ENCODE measurements at regions of chr10 and their contacts with region 1.

Region 1: DNA sequence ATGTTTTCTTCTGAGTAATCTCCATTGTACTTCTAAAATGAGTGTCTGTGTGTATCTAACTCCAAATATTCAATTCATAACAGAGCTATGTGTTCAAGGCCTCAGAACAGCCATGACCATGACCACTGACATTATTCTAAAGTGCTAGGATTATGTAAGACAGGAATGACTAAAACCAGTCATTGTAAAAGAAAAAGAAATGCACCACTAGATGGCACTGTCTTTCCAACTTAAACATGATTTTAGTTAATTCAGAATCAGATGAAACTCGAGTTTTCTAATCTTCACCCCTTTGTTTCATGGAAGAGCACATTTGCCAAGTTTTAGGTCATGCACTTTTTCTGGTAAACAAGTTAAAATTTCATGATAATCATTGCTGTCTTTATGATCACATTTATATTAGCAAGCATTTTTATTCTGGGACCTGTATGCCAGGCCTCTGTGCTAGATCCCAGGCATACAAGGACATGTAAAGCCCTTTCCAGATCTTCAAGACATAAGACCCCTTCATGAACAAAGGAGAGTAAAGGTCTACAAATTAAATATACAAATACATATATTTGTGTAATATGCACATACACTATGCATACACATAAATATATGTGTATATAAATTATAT is 26.1 kb upstream of the RSU1 start:
- DNase-seq: peak in 3 of 9 experiments; percentile 16 to 78 (median 63)
- ATAC-seq: peak; percentile 51
- H3K4me3 ChIP-seq: no peak overlapping the region
- H3K4me3 Mint-ChIP-seq: no peak overlapping the region
- H3K27ac ChIP-seq: no peak overlapping the region
- H3K27ac Mint-ChIP-seq: no peak overlapping the region
- H3K4me1 ChIP-seq: no peaks in the 10 kb centered on the region
- H3K4me1 Mint-ChIP-seq: no peaks in the 10 kb centered on the region
- H3K27me3 ChIP-seq: no peaks in the 10 kb centered on the region
- H3K27me3 Mint-ChIP-seq: no peaks in the 10 kb centered on the region
- CTCF ChIP-seq: peak; percentile 72

Region 2: GRCh38 chr10:16765509-16766375 is 77.6 kb before region 1 on chr10:
- CTCF ChIA-PET with region 1: no interaction called
- POLR2A ChIA-PET with region 1: no interaction called
- intact Hi-C with region 1: no loop called
- DNase-seq: no peak
- ATAC-seq: no peak
- H3K4me3 ChIP-seq: no peak overlapping the region
- H3K4me3 Mint-ChIP-seq: no peak overlapping the region
- H3K27ac ChIP-seq: no peak overlapping the region
- H3K27ac Mint-ChIP-seq: no peak overlapping the region
- H3K4me1 ChIP-seq: no peaks in the 10 kb centered on the region
- H3K4me1 Mint-ChIP-seq: peaks cover 20% of the 10 kb centered on the region
- H3K27me3 ChIP-seq: no peaks in the 10 kb centered on the region
- H3K27me3 Mint-ChIP-seq: no peaks in the 10 kb centered on the region
- CTCF ChIP-seq: no peak

Region 3: GRCh38 chr10:16867556-16867955 is 24.2 kb after region 1 on chr10:
- CTCF ChIA-PET with region 1: no interaction called
- POLR2A ChIA-PET with region 1: no interaction called
- intact Hi-C with region 1: no loop called
- DNase-seq: no peak
- ATAC-seq: no peak
- H3K4me3 ChIP-seq: no peak overlapping the region
- H3K4me3 Mint-ChIP-seq: no peak overlapping the region
- H3K27ac ChIP-seq: no peak overlapping the region
- H3K27ac Mint-ChIP-seq: no peak overlapping the region
- H3K4me1 ChIP-seq: no peaks in the 10 kb centered on the region
- H3K4me1 Mint-ChIP-seq: no peaks in the 10 kb centered on the region
- H3K27me3 ChIP-seq: no peaks in the 10 kb centered on the region
- H3K27me3 Mint-ChIP-seq: no peaks in the 10 kb centered on the region
- CTCF ChIP-seq: no peak

Region 4: GRCh38 chr10:17249820-17250219 is 406.5 kb after region 1 on chr10:
- CTCF ChIA-PET with region 1: interaction called, 10 read pairs
- POLR2A ChIA-PET with region 1: no interaction called
- intact Hi-C with region 1: loop called (anchors 1 to 2 kb)
- DNase-seq: peak in 2 of 9 experiments; percentile 40 to 55
- ATAC-seq: peak; percentile 62
- H3K4me3 ChIP-seq: no peak overlapping the region
- H3K4me3 Mint-ChIP-seq: no peak overlapping the region
- H3K27ac ChIP-seq: no peak overlapping the region
- H3K27ac Mint-ChIP-seq: no peak overlapping the region
- H3K4me1 ChIP-seq: no peaks in the 10 kb centered on the region
- H3K4me1 Mint-ChIP-seq: no peaks in the 10 kb centered on the region
- H3K27me3 ChIP-seq: no peaks in the 10 kb centered on the region
- H3K27me3 Mint-ChIP-seq: no peaks in the 10 kb centered on the region
- CTCF ChIP-seq: peak; percentile 36

Region 5: GRCh38 chr10:17348501-17349349 is 505.4 kb after region 1 on chr10:
- CTCF ChIA-PET with region 1: no interaction called
- POLR2A ChIA-PET with region 1: no interaction called
- intact Hi-C with region 1: no loop called
- DNase-seq: no peak
- ATAC-seq: no peak
- H3K4me3 ChIP-seq: no peak overlapping the region
- H3K4me3 Mint-ChIP-seq: no peak overlapping the region
- H3K27ac ChIP-seq: no peak overlapping the region
- H3K27ac Mint-ChIP-seq: no peak overlapping the region
- H3K4me1 ChIP-seq: no peaks in the 10 kb centered on the region
- H3K4me1 Mint-ChIP-seq: no peaks in the 10 kb centered on the region
- H3K27me3 ChIP-seq: no peaks in the 10 kb centered on the region
- H3K27me3 Mint-ChIP-seq: peaks cover 13% of the 10 kb centered on the region
- CTCF ChIP-seq: no peak